ENCODE measurements at regions of chr3 and their contacts with region 1.

Region 1: GRCh38 chr3:72996473-72997333 is at the start of gene PPP4R2:
- DNase-seq: peak; percentile 96
- ATAC-seq: peak; percentile 90
- H3K4me3 Mint-ChIP-seq: peak within 1 kb of the TSS; percentile 89
- H3K27ac Mint-ChIP-seq: peak within 1 kb of the TSS; percentile 83
- H3K4me1 Mint-ChIP-seq: peaks cover 36% of the 10 kb centered on the region
- H3K27me3 Mint-ChIP-seq: no peaks in the 10 kb centered on the region
- CTCF ChIP-seq: no peak
- total RNA-seq, gene PPP4R2: 54.7 and 59.7 TPM in 2 replicates

Region 2: GRCh38 chr3:72163809-72164634 is 832.7 kb before region 1 on chr3:
- CTCF ChIA-PET with region 1: no interaction called
- POLR2A ChIA-PET with region 1: no interaction called
- intact Hi-C with region 1: loop called (anchors 5 kb)
- DNase-seq: peak; percentile 53
- ATAC-seq: peak; percentile 87
- H3K4me3 Mint-ChIP-seq: peak overlapping the region; percentile 64
- H3K27ac Mint-ChIP-seq: peak overlapping the region; percentile 81
- H3K4me1 Mint-ChIP-seq: peaks cover 52% of the 10 kb centered on the region
- H3K27me3 Mint-ChIP-seq: peaks cover 2% of the 10 kb centered on the region
- CTCF ChIP-seq: no peak

Region 3: GRCh38 chr3:72847751-72848702 is 148.7 kb before region 1 on chr3 and contains the start of gene SHQ1:
- CTCF ChIA-PET with region 1: no interaction called
- POLR2A ChIA-PET with region 1: no interaction called
- intact Hi-C with region 1: loop called (anchors 1 kb)
- DNase-seq: peak; percentile 84
- ATAC-seq: peak; percentile 95
- H3K4me3 Mint-ChIP-seq: peak within 1 kb of the TSS; percentile 92
- H3K27ac Mint-ChIP-seq: peak within 1 kb of the TSS; percentile 79
- H3K4me1 Mint-ChIP-seq: peaks cover 45% of the 10 kb centered on the region
- H3K27me3 Mint-ChIP-seq: no peaks in the 10 kb centered on the region
- CTCF ChIP-seq: no peak
- total RNA-seq, gene SHQ1: 21.2 and 25.3 TPM in 2 replicates

Region 4: DNA sequence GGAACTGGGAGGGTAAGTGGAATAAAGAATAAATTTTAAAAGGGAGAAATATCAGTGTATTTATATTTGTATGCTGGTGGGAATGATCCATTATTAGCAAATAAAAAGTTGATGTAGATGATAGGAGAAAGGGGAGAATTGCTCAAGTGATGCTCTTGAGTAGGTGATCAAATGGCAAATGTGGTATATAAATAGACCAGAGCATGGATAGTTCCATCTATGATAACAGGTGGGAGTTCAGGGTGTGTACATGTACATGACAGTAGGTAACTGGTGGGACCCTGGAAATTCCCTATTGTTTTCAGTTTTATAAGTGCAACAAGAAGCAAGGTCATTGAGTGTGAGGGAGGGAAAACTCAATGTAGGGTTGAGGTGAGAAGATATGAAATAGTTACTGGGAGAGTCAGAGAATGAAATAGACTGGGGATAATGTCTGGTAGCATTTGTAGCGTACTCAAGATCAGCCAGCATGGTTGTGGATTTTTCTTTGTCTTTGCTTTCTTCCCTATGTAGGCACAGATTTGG is 33.4 kb after region 1 on chr3:
- CTCF ChIA-PET with region 1: no interaction called
- POLR2A ChIA-PET with region 1: interaction called, 3 read pairs
- intact Hi-C with region 1: loop called (anchors 5 kb)
- DNase-seq: no peak
- ATAC-seq: no peak
- H3K4me3 Mint-ChIP-seq: no peak overlapping the region
- H3K27ac Mint-ChIP-seq: no peak overlapping the region
- H3K4me1 Mint-ChIP-seq: peaks cover 74% of the 10 kb centered on the region
- H3K27me3 Mint-ChIP-seq: no peaks in the 10 kb centered on the region
- CTCF ChIP-seq: no peak

Region 5: GRCh38 chr3:73070675-73071575 is 74.2 kb after region 1 on chr3:
- CTCF ChIA-PET with region 1: no interaction called
- POLR2A ChIA-PET with region 1: no interaction called
- intact Hi-C with region 1: no loop called
- DNase-seq: no peak
- ATAC-seq: no peak
- H3K4me3 Mint-ChIP-seq: no peak overlapping the region
- H3K27ac Mint-ChIP-seq: no peak overlapping the region
- H3K4me1 Mint-ChIP-seq: no peaks in the 10 kb centered on the region
- H3K27me3 Mint-ChIP-seq: no peaks in the 10 kb centered on the region
- CTCF ChIP-seq: no peak

Measured in activated B cell treated with CpG ODN at 0.5 μM for 24 hours (primary cell).